ENCODE measurements at regions of chr17 and their contacts with region 1.

Region 1: GRCh38 chr17:20992987-20993862 is 49.6 kb downstream of the USP22 start:
- DNase-seq: peak in 41 of 42 donors; percentile 66 to 93 (median 84)

Region 2: GRCh38 chr17:20916383-20916782 is 76.8 kb before region 1 on chr17:
- intact Hi-C with region 1: loop called (anchors 10 kb)
- DNase-seq: no peak

Region 3: GRCh38 chr17:20944014-20944865 is 49.0 kb before region 1 on chr17:
- intact Hi-C with region 1: no loop called
- DNase-seq: no peak